WTC11 (cell line): ENCODE measurements at regions of chr3 and their contacts with region 1.

Region 1: GRCh38 chr3:49912881-49913281 is 9.2 kb upstream of the MST1R start:
- DNase-seq: no peak
- ATAC-seq: no peak
- H3K4me3 Mint-ChIP-seq: no peak overlapping the region
- H3K27ac Mint-ChIP-seq: peak overlapping the region; percentile 57; the same call in 1 of the 2 replicates
- H3K4me1 Mint-ChIP-seq: peaks cover 27% of the 10 kb centered on the region
- H3K27me3 Mint-ChIP-seq: peaks cover 11% of the 10 kb centered on the region
- CTCF ChIP-seq: no peak

Region 2: GRCh38 chr3:49723628-49724551 is 189.0 kb before region 1 on chr3 and contains the start of gene GMPPB:
- CTCF ChIA-PET with region 1: interaction called, 10 read pairs
- POLR2A ChIA-PET with region 1: no interaction called
- DNase-seq: peak; percentile 97
- ATAC-seq: peak; percentile 79
- H3K4me3 Mint-ChIP-seq: peak within 1 kb of the TSS; percentile 91
- H3K27ac Mint-ChIP-seq: peak within 1 kb of the TSS; percentile 98
- H3K4me1 Mint-ChIP-seq: peaks cover 11% of the 10 kb centered on the region
- H3K27me3 Mint-ChIP-seq: no peaks in the 10 kb centered on the region
- CTCF ChIP-seq: no peak
- total RNA-seq, gene GMPPB: 23.7 to 28.7 TPM (median 28.0 TPM) in 3 replicates

Region 3: GRCh38 chr3:49867871-49868321 is 45.0 kb before region 1 on chr3:
- CTCF ChIA-PET with region 1: interaction called, 20 read pairs
- POLR2A ChIA-PET with region 1: no interaction called
- DNase-seq: peak; percentile 78
- ATAC-seq: peak; percentile 56
- H3K4me3 Mint-ChIP-seq: peak overlapping the region; percentile 65
- H3K27ac Mint-ChIP-seq: peak overlapping the region; percentile 70; the same call in 1 of the 2 replicates
- H3K4me1 Mint-ChIP-seq: peaks cover 44% of the 10 kb centered on the region
- H3K27me3 Mint-ChIP-seq: peaks cover 4% of the 10 kb centered on the region
- CTCF ChIP-seq: no peak

Region 4: DNA sequence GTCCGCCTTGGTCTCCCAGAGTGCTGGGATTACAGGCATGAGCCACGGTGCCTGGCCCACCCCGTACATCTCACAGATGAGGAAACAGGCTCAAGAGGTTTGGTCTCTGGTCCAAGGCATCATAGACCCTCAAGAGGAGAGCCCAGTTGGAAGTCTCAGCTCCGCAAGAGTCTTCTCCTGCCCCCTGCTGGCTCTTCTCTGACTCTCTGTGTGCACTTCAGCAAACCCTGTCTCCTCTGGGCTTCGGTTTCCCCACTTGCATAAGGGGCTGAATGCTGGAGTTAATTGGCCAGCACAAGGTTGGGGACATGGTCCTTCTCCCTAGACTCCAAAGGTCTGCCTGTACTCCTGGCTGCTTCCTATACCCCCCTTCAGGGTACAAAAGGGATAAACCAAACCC is 13.1 kb before region 1 on chr3:
- CTCF ChIA-PET with region 1: interaction called, 24 read pairs
- POLR2A ChIA-PET with region 1: no interaction called
- DNase-seq: peak; percentile 61
- ATAC-seq: peak; percentile 8
- H3K4me3 Mint-ChIP-seq: no peak overlapping the region
- H3K27ac Mint-ChIP-seq: no peak overlapping the region
- H3K4me1 Mint-ChIP-seq: peaks cover 7% of the 10 kb centered on the region
- H3K27me3 Mint-ChIP-seq: no peaks in the 10 kb centered on the region
- CTCF ChIP-seq: peak; percentile 32; the same call in 1 of the 2 replicates

Region 5: GRCh38 chr3:49939858-49940666 is 27.2 kb after region 1 on chr3 and contains the start of gene RBM6:
- CTCF ChIA-PET with region 1: interaction called, 13 read pairs
- POLR2A ChIA-PET with region 1: no interaction called
- DNase-seq: peak; percentile 97
- ATAC-seq: peak; percentile 98
- H3K4me3 Mint-ChIP-seq: peak within 1 kb of the TSS; percentile 98
- H3K27ac Mint-ChIP-seq: peak within 1 kb of the TSS; percentile 97
- H3K4me1 Mint-ChIP-seq: peaks cover 8% of the 10 kb centered on the region
- H3K27me3 Mint-ChIP-seq: no peaks in the 10 kb centered on the region; the same call in 1 of the 2 replicates
- CTCF ChIP-seq: no peak
- total RNA-seq, gene RBM6: 115 to 122 TPM (median 118 TPM) in 3 replicates